HCT116 (cell line): ENCODE measurements at regions of chrX and their contacts with region 1.

Region 1: DNA sequence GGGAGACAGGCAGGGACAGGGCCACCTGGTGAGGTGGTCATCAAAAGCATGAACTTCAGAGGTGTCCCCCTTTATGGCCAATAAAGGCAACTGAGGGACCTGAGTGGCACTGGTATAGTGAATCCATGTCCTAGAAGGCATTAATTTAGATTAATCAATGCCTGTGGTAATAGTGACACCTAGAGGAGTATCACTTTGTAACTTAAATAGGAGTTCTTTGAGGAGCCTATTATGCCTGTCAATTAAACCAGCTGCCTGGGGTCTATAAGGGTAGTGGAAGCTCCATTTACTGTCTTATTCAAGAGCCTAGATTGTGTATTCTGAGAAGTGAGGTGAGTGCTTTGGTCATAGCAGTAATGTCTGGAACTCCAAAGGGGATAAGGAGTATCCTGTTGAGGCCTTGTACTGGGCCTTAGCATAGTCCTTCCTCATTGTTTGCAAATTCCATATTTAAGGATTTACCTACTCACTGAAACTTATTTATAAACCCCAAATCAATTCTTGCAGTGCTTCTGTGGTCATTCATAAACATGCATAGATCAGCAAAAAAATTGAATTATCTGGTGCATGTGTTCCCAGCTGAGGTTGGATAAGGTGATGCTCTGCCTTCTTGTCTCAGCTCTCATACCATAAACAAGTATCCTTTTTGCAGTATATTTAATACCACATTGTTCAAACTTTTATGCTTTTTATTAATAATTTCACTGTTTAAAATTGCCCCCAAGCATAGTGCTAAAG is 213.8 kb upstream of the RADX start:
- DNase-seq: peak; percentile 21
- ATAC-seq: peak; percentile 84
- H3K4me3 ChIP-seq: no peak overlapping the region
- H3K27ac ChIP-seq: no peak overlapping the region
- H3K4me1 ChIP-seq: no peaks in the 10 kb centered on the region
- H3K27me3 ChIP-seq: no peaks in the 10 kb centered on the region
- CTCF ChIP-seq: peak; percentile 7 to 46 (median 33); a peak in 4 of 6 replicates
- POLR2A ChIP-seq: no peak
- RAD21 ChIP-seq: peak; percentile 69

Region 2: DNA sequence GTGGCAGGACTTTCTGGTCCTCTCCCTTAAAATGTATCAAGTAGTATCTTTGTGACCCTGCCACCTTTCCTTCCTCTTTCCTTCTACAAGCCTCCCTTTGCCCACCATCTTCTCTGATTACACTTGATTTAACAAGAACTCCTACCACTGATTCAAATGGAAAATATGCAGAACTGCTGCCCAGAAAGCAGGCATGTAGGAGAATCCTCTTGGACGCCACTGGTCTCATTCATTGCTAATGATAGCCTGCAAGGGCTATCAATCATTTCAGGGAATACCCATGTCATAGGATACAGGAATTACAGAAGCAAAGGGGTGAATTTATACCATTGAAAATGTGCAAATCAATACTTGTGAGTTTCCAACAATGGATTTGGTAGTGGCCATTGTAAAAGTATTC is 870.2 kb before region 1 on chrX:
- CTCF ChIA-PET with region 1: no interaction called
- POLR2A ChIA-PET with region 1: no interaction called
- RAD21 ChIA-PET with region 1: no interaction called
- intact Hi-C with region 1: no loop called
- DNase-seq: no peak
- ATAC-seq: no peak
- H3K4me3 ChIP-seq: no peak overlapping the region
- H3K27ac ChIP-seq: no peak overlapping the region
- H3K4me1 ChIP-seq: no peaks in the 10 kb centered on the region
- H3K27me3 ChIP-seq: no peaks in the 10 kb centered on the region
- CTCF ChIP-seq: no peak
- POLR2A ChIP-seq: no peak
- RAD21 ChIP-seq: no peak

Region 3: GRCh38 chrX:105876658-105877057 is 521.3 kb before region 1 on chrX:
- CTCF ChIA-PET with region 1: interaction called, 5 read pairs
- POLR2A ChIA-PET with region 1: no interaction called
- RAD21 ChIA-PET with region 1: no interaction called
- intact Hi-C with region 1: loop called (anchors 5 kb)
- DNase-seq: peak; percentile 29
- ATAC-seq: peak; percentile 57; the same call in 1 of the 2 replicates
- H3K4me3 ChIP-seq: no peak overlapping the region
- H3K27ac ChIP-seq: no peak overlapping the region
- H3K4me1 ChIP-seq: no peaks in the 10 kb centered on the region
- H3K27me3 ChIP-seq: no peaks in the 10 kb centered on the region
- CTCF ChIP-seq: peak; percentile 13 to 51 (median 43); a peak in 3 of 6 replicates
- POLR2A ChIP-seq: no peak
- RAD21 ChIP-seq: peak; percentile 32; the same call in 1 of the 2 replicates

Region 4: DNA sequence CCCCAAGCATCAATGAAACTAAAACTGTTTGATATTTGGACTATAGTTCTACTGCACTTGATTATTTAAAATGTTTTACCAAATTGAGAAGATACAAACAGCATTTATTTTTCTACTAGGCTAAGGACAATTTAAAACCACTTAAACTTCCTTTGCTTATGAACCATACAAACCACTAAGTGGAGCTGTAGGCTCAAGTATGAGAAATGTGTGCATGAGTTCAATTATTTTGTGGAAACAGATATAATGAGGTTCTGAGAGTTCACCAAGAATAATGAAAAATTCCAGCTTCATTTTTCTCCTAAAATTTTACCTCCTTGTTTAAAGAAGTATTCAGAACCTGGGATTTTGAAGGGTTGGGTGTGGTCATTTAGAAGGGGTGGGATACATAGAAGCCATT is 422.6 kb before region 1 on chrX:
- CTCF ChIA-PET with region 1: interaction called, 6 read pairs
- POLR2A ChIA-PET with region 1: no interaction called
- RAD21 ChIA-PET with region 1: no interaction called
- intact Hi-C with region 1: loop called (anchors 2 kb)
- DNase-seq: peak; percentile 12
- ATAC-seq: 0 out of 2 replicates have a peak, but pooled peaks have one; percentile 44
- H3K4me3 ChIP-seq: no peak overlapping the region
- H3K27ac ChIP-seq: no peak overlapping the region
- H3K4me1 ChIP-seq: no peaks in the 10 kb centered on the region
- H3K27me3 ChIP-seq: no peaks in the 10 kb centered on the region
- CTCF ChIP-seq: peak; percentile 12 to 43 (median 29); a peak in 4 of 6 replicates
- POLR2A ChIP-seq: no peak
- RAD21 ChIP-seq: peak; percentile 57

Region 5: GRCh38 chrX:106039920-106040319 is 358.1 kb before region 1 on chrX:
- CTCF ChIA-PET with region 1: interaction called, 5 read pairs
- POLR2A ChIA-PET with region 1: no interaction called
- RAD21 ChIA-PET with region 1: interaction called in 1 of 2 experiments, 5 read pairs
- intact Hi-C with region 1: loop called (anchors 5 kb)
- DNase-seq: peak; percentile 8
- ATAC-seq: peak; percentile 80
- H3K4me3 ChIP-seq: no peak overlapping the region
- H3K27ac ChIP-seq: no peak overlapping the region
- H3K4me1 ChIP-seq: no peaks in the 10 kb centered on the region
- H3K27me3 ChIP-seq: no peaks in the 10 kb centered on the region
- CTCF ChIP-seq: peak; percentile 21 to 46 (median 42); a peak in 4 of 6 replicates
- POLR2A ChIP-seq: no peak
- RAD21 ChIP-seq: peak; percentile 42; the same call in 1 of the 2 replicates

Region 6: DNA sequence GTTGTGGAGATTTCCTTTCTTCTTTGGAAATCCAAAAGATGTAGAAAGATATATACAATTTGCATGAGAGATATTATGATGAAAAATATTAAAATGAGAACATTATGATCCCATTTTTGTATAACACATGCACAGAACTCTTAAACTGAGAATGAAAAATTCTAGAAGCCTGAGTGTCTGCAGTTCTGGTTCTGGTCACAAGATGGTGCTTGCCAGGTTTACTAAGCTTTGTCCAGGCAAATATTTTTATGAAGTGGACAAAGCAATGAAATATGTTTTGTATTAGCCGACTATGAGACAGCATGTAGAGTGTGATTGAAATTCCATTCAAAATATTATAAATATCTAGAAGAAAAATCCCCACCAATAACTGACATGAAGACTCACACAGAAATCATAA is 227.7 kb before region 1 on chrX:
- CTCF ChIA-PET with region 1: interaction called, 11 read pairs
- POLR2A ChIA-PET with region 1: no interaction called
- RAD21 ChIA-PET with region 1: no interaction called
- intact Hi-C with region 1: loop called (anchors 2 kb)
- DNase-seq: peak; percentile 8
- ATAC-seq: no peak
- H3K4me3 ChIP-seq: no peak overlapping the region
- H3K27ac ChIP-seq: no peak overlapping the region
- H3K4me1 ChIP-seq: peaks cover 0 to 5% of the 10 kb centered on the region in 2 experiments; a peak in 1 of 4 replicates
- H3K27me3 ChIP-seq: no peaks in the 10 kb centered on the region
- CTCF ChIP-seq: peak; percentile 28 to 54 (median 44); a peak in 5 of 6 replicates
- POLR2A ChIP-seq: no peak
- RAD21 ChIP-seq: peak; percentile 54

Region 7: GRCh38 chrX:106752086-106752678 is 354.2 kb after region 1 on chrX:
- CTCF ChIA-PET with region 1: no interaction called
- POLR2A ChIA-PET with region 1: no interaction called
- RAD21 ChIA-PET with region 1: no interaction called
- intact Hi-C with region 1: no loop called
- DNase-seq: no peak
- ATAC-seq: no peak
- H3K4me3 ChIP-seq: no peak overlapping the region
- H3K27ac ChIP-seq: no peak overlapping the region
- H3K4me1 ChIP-seq: no peaks in the 10 kb centered on the region
- H3K27me3 ChIP-seq: no peaks in the 10 kb centered on the region
- CTCF ChIP-seq: peak; percentile 9 to 39 (median 18); a peak in 3 of 6 replicates
- POLR2A ChIP-seq: no peak
- RAD21 ChIP-seq: peak; percentile 61